ENCODE measurements at regions of chr1 and their contacts with region 1.

Region 1: DNA sequence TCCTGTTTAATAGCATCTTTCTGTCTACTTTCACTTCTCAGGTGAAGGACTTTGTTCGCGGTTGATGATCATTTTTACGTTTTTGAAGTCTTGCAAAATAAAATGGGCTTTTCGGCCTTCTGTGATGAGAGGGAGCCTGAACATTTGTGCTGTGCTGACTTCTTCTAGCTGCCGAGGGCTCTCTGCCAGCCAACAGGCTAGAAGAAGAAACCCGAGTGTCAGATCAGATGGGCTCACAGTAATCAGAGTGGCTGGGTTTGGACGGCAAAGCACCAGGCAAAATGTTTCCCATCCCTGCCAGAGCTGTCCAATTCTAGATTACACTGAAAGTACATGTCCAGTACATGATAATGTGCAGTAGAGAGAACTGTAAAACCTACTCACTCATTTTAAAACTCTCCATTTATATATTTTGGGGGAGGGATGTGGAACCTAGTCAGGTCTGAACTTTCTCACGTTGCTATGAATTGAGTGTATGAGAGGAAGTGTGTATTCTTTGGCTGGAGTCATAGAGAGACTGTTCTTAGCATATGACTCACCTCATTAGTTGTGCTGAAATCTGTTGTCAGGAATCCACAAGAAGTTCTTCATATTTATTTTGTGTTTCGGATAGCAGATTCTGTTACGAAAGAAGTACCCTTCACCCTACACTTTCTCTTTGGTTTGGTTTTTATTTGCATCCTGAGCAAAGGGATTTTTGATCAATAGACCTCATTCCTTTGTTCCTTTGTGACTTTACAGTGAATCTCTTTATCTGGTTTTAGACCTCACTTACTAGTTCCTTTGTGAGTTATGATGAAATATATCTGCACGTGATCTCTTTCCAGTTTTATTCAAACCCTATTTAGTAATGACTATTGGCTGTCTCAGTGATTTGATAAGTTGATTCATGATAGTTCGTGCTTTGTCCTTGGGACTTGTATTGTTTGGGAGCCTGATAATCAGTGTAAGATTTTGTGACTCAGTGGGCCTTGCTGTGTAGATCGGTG is 4.8 kb downstream of the ATP1A1 start:
- DNase-seq: peak; percentile 55
- H3K4me3 Mint-ChIP-seq: peak overlapping the region; percentile 69
- H3K27ac Mint-ChIP-seq: peak overlapping the region; percentile 83
- H3K4me1 Mint-ChIP-seq: peaks cover 77% of the 10 kb centered on the region
- H3K27me3 Mint-ChIP-seq: no peaks in the 10 kb centered on the region

Region 2: GRCh38 chr1:116151739-116152576 is 225.9 kb before region 1 on chr1:
- CTCF ChIA-PET with region 1: no interaction called
- POLR2A ChIA-PET with region 1: no interaction called
- intact Hi-C with region 1: loop called (anchors 5 kb)
- DNase-seq: peak; percentile 85
- H3K4me3 Mint-ChIP-seq: peak overlapping the region; percentile 40
- H3K27ac Mint-ChIP-seq: no peak overlapping the region
- H3K4me1 Mint-ChIP-seq: peaks cover 11% of the 10 kb centered on the region
- H3K27me3 Mint-ChIP-seq: peaks cover 1% of the 10 kb centered on the region

Region 3: DNA sequence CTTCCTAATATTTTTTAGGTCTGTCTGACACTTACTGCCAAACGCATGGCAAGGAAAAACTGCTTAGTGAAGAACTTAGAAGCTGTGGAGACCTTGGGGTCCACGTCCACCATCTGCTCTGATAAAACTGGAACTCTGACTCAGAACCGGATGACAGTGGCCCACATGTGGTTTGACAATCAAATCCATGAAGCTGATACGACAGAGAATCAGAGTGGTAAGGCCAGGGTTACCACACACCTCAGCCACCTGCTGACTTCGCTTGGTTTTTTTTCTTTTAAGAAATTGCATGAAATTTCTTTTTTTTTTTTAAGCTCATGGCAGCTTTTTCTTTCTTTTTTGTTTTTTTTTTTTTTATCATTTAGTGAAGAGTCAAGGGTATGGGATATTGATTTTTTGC is 12.4 kb after region 1 on chr1:
- CTCF ChIA-PET with region 1: interaction called, 3 read pairs
- POLR2A ChIA-PET with region 1: interaction called, 8 read pairs
- intact Hi-C with region 1: loop called (anchors 1 kb)
- DNase-seq: peak; percentile 80
- H3K4me3 Mint-ChIP-seq: no peak overlapping the region
- H3K27ac Mint-ChIP-seq: no peak overlapping the region
- H3K4me1 Mint-ChIP-seq: peaks cover 55% of the 10 kb centered on the region
- H3K27me3 Mint-ChIP-seq: no peaks in the 10 kb centered on the region

Region 4: GRCh38 chr1:116485071-116485735 is 107.4 kb after region 1 on chr1:
- CTCF ChIA-PET with region 1: interaction called, 16 read pairs
- POLR2A ChIA-PET with region 1: no interaction called
- intact Hi-C with region 1: no loop called
- DNase-seq: peak; percentile 90
- H3K4me3 Mint-ChIP-seq: no peak overlapping the region
- H3K27ac Mint-ChIP-seq: no peak overlapping the region
- H3K4me1 Mint-ChIP-seq: peaks cover 7% of the 10 kb centered on the region
- H3K27me3 Mint-ChIP-seq: no peaks in the 10 kb centered on the region

Region 5: DNA sequence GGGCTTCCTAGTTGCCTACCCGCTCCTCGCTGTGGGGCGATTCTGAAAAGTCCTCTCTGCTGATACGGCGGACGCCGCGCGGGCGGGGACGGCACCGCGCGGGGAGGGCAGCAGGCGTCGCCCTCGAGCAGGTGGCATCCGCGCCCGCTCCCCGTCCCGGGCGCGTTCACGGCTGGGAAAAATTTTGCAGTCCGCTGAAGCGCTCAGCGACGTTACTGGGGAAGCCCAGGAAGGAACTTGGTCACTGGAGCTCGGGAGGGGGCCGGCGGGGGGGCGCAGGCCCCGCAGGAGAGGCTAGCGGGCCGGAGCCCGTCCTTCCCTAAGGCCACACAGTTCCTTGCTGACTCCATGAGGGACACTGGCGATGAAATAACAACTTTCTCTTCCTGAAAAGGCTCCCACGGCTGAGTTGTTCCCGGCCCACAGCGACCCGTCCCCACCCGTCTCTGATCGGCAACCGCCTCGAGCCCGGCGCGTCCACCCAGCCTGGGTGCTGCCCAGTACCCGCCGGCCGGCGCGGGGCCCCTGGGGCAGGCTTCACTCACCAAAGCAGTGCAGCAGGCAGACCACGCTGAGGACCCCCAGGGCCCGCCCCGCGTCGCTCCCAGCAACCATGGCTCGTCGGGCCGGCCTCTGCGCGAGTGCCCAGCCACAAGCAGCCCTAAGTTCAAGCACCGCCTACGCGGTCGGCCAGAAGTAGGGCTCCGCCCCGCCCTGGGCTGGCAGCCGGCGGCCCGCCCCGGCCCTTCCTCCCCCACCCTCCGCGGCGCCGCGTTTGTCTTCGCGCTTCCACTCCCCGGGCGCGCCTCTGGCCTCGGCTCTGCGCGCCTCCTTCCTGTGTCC is 192.7 kb after region 1 on chr1 and contains the start of gene CD58:
- CTCF ChIA-PET with region 1: no interaction called
- POLR2A ChIA-PET with region 1: no interaction called
- intact Hi-C with region 1: loop called (anchors 2 kb)
- DNase-seq: peak; percentile 92
- H3K4me3 Mint-ChIP-seq: peak within 1 kb of the TSS; percentile 99
- H3K27ac Mint-ChIP-seq: peak within 1 kb of the TSS; percentile 93
- H3K4me1 Mint-ChIP-seq: peaks cover 72% of the 10 kb centered on the region
- H3K27me3 Mint-ChIP-seq: no peaks in the 10 kb centered on the region
- total RNA-seq, gene CD58: 21.9 to 27.2 TPM

Region 6: GRCh38 chr1:117664314-117664713 is 1286.5 kb after region 1 on chr1:
- CTCF ChIA-PET with region 1: no interaction called
- POLR2A ChIA-PET with region 1: no interaction called
- intact Hi-C with region 1: loop called (anchors 5 kb)
- DNase-seq: peak; percentile 76
- H3K4me3 Mint-ChIP-seq: no peak overlapping the region
- H3K27ac Mint-ChIP-seq: peak overlapping the region; percentile 68
- H3K4me1 Mint-ChIP-seq: peaks cover 78% of the 10 kb centered on the region
- H3K27me3 Mint-ChIP-seq: no peaks in the 10 kb centered on the region

Measured in activated CD4-positive, alpha-beta memory T cell treated with anti-CD3 and anti-CD28 coated beads for 36 hours (primary cell).